ENCODE measurements at regions of chr5 and their contacts with region 1.

Region 1: DNA sequence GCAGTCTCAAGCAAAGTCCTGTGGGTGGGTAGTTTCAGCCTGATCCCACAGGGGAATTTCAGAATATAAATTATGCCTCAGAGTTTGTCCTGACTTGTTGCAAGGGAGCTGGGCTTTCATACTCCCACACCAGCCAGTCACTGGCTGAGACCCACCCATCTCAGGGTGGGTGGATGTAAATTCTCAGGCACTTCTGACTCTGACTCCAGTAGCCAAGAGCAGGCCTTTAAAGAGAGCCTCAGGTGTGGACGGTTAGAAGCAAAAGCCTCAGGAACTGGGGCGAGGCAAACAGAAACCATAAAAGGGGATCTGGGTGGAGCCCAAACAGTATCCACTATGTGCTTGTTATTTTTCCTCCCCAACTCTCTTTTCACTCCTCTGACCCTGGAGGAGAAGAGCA is 28.6 kb upstream of the FBXW11 start:
- DNase-seq: peak; percentile 49
- CTCF ChIP-seq: no peak

Region 2: GRCh38 chr5:171418316-171418981 is 616.6 kb before region 1 on chr5:
- in situ Hi-C with region 1: loop called (anchors 25 kb)
- DNase-seq: peak; percentile 93
- CTCF ChIP-seq: peak; percentile 97

Region 3: DNA sequence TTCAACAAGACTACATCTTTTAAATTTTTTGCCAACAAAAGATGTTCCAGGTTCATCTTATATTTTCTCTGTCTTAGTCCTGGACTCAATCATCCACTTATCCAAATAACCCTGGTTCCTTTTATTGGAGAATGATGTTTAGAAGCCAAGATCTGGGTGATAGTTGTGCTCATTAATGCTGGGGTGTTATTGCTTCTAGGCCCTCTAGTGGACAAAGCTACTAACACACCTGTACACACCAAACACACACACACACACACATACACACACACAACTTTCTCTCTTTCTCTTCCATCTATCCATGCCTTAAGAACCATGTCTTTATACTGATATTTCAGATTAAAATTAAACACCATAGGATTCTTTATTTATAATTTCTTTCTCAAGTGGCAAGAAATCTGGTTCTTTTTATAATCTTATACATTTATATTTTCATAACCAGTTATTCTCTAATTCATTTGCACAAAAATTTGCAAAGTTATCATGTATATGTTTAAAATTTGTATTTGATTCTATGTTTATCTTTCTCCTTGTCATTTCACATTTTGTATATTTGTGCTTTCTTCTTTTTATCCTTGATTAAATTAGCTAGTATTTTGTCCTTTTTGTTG is 428.5 kb before region 1 on chr5:
- in situ Hi-C with region 1: loop called (anchors 25 kb)
- DNase-seq: no peak
- CTCF ChIP-seq: peak; percentile 40